Activated T-helper 2 cell treated with anti-CD3 and anti-CD28 coated beads, Interferon-gamma antibody, Interleukin-2, Interleukin-4, amounts not matched to agents 10 μg/mL and 5 μg/mL and 100 μg/mL, durations not matched to agents 14 hours and 24 hours and 36 hours (primary cell): ENCODE measurements at regions of chr19 and their contacts with region 1.

Region 1: GRCh38 chr19:42199440-42200115 is 17.9 kb downstream of the DEDD2 start:
- DNase-seq: peak; percentile 79
- H3K4me3 Mint-ChIP-seq: peak overlapping the region; percentile 77
- H3K27ac Mint-ChIP-seq: peak overlapping the region; percentile 94
- H3K4me1 Mint-ChIP-seq: peaks cover 54% of the 10 kb centered on the region
- H3K27me3 Mint-ChIP-seq: no peaks in the 10 kb centered on the region

Region 2: GRCh38 chr19:42108527-42109389 is 90.8 kb before region 1 on chr19:
- intact Hi-C with region 1: no loop called
- DNase-seq: peak; percentile 82
- H3K4me3 Mint-ChIP-seq: no peak overlapping the region
- H3K27ac Mint-ChIP-seq: peak overlapping the region; percentile 8
- H3K4me1 Mint-ChIP-seq: peaks cover 35% of the 10 kb centered on the region
- H3K27me3 Mint-ChIP-seq: no peaks in the 10 kb centered on the region

Region 3: GRCh38 chr19:42176990-42177685 is 22.4 kb before region 1 on chr19:
- intact Hi-C with region 1: loop called (anchors 2 kb)
- DNase-seq: peak; percentile 73
- H3K4me3 Mint-ChIP-seq: no peak overlapping the region
- H3K27ac Mint-ChIP-seq: no peak overlapping the region
- H3K4me1 Mint-ChIP-seq: peaks cover 7% of the 10 kb centered on the region
- H3K27me3 Mint-ChIP-seq: peaks cover 39% of the 10 kb centered on the region

Region 4: DNA sequence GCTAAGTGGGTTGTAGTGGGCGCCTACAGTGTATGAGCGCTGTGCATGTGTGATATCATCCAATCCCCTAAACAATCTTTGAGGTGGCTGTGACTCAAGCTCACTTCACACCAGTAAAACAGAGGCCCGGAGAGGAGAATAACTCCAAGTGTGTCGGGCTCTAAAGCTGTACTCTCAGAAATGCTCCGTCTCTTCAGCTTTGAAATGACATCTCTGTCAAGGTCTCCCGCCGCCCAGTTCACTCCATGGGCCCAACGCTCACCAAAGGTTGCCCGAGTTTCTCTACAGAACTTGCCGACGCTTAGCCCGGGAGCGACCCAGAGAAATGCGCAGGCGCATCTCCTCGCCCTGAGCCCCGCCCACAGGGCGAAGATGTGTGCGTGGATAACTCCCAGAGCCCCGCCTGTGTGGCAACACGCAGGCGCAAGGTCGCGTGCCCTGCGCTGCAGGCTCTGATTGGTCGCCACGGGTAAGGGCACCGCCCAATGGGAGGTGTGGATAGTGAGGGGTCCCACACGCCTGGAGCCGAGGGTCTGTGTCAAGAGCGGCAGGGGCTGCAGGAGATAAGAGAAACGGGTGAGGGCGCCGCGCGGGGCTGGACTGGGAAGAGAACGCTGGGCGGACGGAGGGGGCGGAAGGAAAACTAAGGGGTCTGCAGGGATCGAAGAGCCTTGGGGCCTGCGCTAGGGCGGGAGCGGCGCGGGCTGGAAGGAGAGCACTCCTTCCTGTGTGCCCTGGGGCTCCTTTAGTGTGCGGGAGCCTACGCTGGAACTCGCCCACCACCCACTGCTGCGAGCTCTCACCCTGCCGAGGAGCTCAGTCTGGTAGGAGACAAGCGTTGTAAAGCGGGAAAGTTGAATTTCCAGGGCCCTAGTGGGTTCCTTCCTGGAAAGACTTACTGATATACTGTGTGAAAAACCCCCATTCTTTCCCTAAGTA is 20.5 kb after region 1 on chr19 and contains the start of gene ZNF526:
- intact Hi-C with region 1: loop called (anchors 1 kb)
- DNase-seq: peak; percentile 98
- H3K4me3 Mint-ChIP-seq: peak within 1 kb of the TSS; percentile 99
- H3K27ac Mint-ChIP-seq: peak within 1 kb of the TSS; percentile 95
- H3K4me1 Mint-ChIP-seq: peaks cover 33% of the 10 kb centered on the region
- H3K27me3 Mint-ChIP-seq: no peaks in the 10 kb centered on the region
- total RNA-seq, gene ZNF526: 17.3 and 18.4 TPM in 2 replicates

Region 5: GRCh38 chr19:42254989-42255765 is 55.6 kb after region 1 on chr19 and contains the start of gene ERF:
- intact Hi-C with region 1: loop called (anchors 2 kb)
- DNase-seq: peak; percentile 91
- H3K4me3 Mint-ChIP-seq: peak within 1 kb of the TSS; percentile 74
- H3K27ac Mint-ChIP-seq: peak within 1 kb of the TSS; percentile 62
- H3K4me1 Mint-ChIP-seq: peaks cover 18% of the 10 kb centered on the region
- H3K27me3 Mint-ChIP-seq: peaks cover 7% of the 10 kb centered on the region
- total RNA-seq, gene ERF: 58.4 and 59.1 TPM in 2 replicates

Region 6: DNA sequence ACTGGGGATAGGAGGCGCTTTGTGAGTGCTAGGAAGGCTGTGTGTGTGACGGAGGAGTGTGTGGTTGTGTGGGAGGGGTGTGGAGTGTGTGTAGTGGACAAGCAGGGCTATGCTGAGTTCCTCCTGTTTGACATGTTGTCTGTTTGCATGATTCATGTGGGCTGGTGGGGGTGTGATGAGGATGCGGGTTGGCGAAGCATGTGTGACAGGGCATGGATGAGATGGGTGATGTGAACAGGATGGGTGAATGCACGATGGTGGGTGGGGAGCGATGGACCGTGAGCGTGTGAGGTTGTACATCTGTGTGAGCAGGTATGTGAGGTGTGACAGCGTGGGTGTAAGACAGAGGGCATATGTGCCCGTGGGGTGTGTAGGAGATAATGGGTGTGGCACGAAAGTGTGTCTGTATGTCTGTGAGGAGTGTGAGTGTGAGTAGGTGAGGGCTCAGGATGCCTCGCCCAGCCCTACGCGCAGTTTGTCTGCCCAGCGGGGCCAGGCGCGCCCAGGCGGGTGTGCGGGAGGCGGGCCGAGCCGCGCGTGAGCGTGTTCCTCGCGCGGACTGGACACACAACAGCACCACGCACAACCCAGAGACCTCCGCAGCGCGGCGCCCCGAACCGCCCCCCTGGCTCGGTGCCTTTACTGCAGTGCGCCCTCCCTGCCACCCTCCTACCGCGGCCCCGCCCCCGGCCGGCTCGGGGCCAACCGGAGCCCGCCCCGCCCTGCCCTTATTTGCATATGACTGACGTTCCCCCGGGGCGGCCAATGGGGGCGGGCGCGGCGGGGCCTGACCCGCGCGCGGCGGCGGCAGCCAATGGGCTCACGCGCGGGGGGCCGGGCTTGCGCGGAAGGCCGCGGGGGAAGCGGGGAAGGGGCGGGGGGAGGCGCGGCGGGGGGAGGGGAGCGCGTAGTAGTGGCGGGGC is 83.8 kb after region 1 on chr19:
- intact Hi-C with region 1: loop called (anchors 2 kb)
- DNase-seq: peak; percentile 91
- H3K4me3 Mint-ChIP-seq: no peak overlapping the region
- H3K27ac Mint-ChIP-seq: no peak overlapping the region
- H3K4me1 Mint-ChIP-seq: peaks cover 39% of the 10 kb centered on the region
- H3K27me3 Mint-ChIP-seq: no peaks in the 10 kb centered on the region

Region 7: DNA sequence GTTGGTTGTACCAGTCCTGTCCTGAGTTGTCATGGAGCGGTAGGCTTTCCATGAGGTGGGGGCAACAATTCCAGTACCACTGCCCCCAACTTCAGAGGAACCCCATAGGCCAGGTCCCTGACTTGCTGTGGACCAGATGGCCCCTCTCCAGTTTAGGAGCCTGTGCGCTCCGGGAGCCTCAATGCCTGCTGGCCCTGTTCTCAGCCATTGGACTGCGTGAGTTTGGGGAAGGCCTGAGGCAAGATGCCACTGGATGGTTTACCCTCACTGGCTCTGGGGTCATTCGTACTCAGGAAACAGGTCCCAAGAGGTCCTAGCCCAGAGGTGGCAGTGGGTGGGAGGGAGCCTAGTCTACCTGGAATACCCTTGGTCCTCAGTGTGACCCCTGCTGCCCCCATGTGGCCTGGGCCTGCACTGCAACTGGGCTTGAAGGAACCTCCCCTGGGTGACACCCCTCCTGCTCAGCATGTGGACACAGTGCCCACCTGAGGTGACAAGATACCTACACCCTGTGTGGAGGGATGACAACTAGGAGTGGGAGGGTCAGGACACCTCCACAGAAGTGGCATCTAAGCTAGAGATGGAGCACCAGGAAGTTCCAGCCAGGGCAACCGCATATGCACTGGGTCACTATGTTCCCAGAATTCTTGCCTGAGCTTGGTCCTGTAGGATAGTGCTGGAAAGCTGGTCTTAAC is 96.4 kb after region 1 on chr19:
- intact Hi-C with region 1: loop called (anchors 5 kb)
- DNase-seq: peak; percentile 80
- H3K4me3 Mint-ChIP-seq: no peak overlapping the region
- H3K27ac Mint-ChIP-seq: no peak overlapping the region
- H3K4me1 Mint-ChIP-seq: no peaks in the 10 kb centered on the region
- H3K27me3 Mint-ChIP-seq: no peaks in the 10 kb centered on the region